Activated B cell treated with CpG ODN at 0.5 μM for 24 hours (primary cell): ENCODE measurements at regions of chr19 and their contacts with region 1.

Region 1: GRCh38 chr19:38618590-38619360 is at the start of gene EIF3K:
- DNase-seq: peak; percentile 97
- ATAC-seq: peak; percentile 28
- H3K4me3 Mint-ChIP-seq: peak within 1 kb of the TSS; percentile 100
- H3K27ac Mint-ChIP-seq: peak within 1 kb of the TSS; percentile 97
- H3K4me1 Mint-ChIP-seq: peaks cover 53% of the 10 kb centered on the region
- H3K27me3 Mint-ChIP-seq: no peaks in the 10 kb centered on the region
- CTCF ChIP-seq: no peak
- total RNA-seq, gene EIF3K: 344 and 385 TPM in 2 replicates

Region 2: DNA sequence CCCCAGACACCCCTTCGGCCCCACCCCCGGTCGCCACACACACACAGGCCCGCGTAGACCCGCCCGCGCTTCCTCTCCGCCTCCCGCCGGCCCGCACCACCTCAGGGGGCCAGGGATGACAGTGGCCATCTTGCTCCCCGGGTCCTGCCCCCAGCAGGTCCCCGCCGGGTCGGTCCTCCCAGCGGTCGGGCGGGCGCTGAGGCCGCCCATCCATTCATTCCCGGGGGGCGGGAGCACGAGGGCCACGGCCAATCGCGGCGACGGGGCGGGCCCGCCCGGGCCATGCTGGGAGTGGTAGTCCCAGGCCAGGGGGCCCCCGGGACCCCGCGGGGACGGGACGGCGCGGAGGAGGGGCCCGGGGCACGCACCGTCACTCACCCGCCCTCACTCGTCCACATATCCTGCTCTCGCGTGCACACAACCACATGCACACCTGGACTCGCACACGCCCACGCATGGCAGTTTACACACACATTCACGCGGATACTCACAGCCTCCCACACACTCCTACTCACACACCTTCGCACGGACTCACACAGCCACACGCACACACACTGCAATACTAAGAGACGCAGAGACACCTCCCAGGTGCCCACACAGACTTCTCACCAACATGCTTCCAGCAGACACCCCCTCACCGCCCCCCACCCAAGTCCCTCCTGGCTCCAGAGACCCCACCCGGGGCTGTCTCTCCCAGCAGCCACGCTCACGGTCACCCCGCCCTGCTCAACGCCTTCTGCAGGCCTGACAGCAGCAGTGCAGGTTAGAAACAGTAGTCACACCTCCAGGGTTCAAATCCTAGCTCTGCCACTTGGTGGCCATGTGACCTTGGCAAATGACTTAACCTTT is 394.5 kb before region 1 on chr19 and contains the start of gene DPF1:
- CTCF ChIA-PET with region 1: no interaction called
- POLR2A ChIA-PET with region 1: no interaction called
- intact Hi-C with region 1: loop called (anchors 10 kb)
- DNase-seq: peak; percentile 64
- ATAC-seq: peak; percentile 88
- H3K4me3 Mint-ChIP-seq: peak within 1 kb of the TSS; percentile 85
- H3K27ac Mint-ChIP-seq: peak within 1 kb of the TSS; percentile 66
- H3K4me1 Mint-ChIP-seq: peaks cover 35% of the 10 kb centered on the region
- H3K27me3 Mint-ChIP-seq: peaks cover 52% of the 10 kb centered on the region
- CTCF ChIP-seq: no peak
- total RNA-seq, gene DPF1: not detected in 2 replicates

Region 3: GRCh38 chr19:38544034-38544958 is 74.5 kb before region 1 on chr19:
- CTCF ChIA-PET with region 1: interaction called, 7 read pairs
- POLR2A ChIA-PET with region 1: interaction called, 19 read pairs
- intact Hi-C with region 1: loop called (anchors 1 kb)
- DNase-seq: no peak
- ATAC-seq: peak; percentile 65
- H3K4me3 Mint-ChIP-seq: peak overlapping the region; percentile 11
- H3K27ac Mint-ChIP-seq: peak overlapping the region; percentile 30
- H3K4me1 Mint-ChIP-seq: peaks cover 33% of the 10 kb centered on the region
- H3K27me3 Mint-ChIP-seq: no peaks in the 10 kb centered on the region
- CTCF ChIP-seq: peak; percentile 41

Region 4: DNA sequence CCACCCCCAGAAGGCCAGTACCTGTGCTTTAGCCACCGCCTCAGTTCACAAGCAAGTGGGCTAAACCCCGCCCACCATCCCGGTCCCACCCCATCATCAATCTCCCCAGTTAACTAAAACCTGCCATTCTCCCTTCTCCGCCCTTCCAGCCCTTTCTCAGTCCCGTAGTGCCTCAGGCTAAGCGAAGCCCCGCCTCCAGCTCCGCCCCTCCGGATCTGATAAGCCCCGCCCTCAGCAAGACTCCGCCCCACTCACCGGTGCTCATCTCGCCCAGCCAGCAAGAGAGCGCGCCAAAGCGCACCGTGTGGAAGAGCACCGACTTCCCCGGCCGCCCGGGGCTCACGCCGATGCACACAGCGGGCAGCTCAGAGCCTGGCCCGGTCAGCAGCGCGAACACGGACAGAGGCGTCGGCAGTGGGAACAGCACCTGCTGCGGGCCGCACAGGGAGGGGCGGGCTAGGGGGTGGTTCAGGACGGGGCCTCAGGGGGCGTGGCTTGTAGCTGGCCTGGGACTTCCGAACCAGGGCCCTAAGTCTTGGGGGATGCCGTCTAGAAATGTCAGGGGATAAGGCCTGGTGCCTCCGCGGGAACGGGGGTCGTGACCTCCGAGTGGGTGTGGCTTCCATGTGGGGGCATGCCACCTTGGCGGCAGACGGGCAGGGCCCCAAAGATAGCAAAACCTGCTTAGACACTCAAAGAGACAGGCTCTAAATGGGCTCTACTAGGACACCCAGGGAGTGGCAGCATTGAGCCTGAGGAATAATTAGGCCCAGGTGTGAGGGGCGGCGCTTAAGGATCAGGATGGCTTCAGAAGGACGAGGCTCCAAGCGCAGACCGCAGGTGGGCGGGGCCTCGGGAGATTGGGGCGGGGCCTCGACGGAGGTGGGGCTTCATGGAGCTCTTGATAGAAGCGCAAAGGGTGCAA is 22.5 kb before region 1 on chr19:
- CTCF ChIA-PET with region 1: no interaction called
- POLR2A ChIA-PET with region 1: interaction called, 12 read pairs
- intact Hi-C with region 1: no loop called
- DNase-seq: no peak
- ATAC-seq: peak; percentile 42
- H3K4me3 Mint-ChIP-seq: no peak overlapping the region
- H3K27ac Mint-ChIP-seq: no peak overlapping the region
- H3K4me1 Mint-ChIP-seq: no peaks in the 10 kb centered on the region
- H3K27me3 Mint-ChIP-seq: no peaks in the 10 kb centered on the region
- CTCF ChIP-seq: no peak

Region 5: DNA sequence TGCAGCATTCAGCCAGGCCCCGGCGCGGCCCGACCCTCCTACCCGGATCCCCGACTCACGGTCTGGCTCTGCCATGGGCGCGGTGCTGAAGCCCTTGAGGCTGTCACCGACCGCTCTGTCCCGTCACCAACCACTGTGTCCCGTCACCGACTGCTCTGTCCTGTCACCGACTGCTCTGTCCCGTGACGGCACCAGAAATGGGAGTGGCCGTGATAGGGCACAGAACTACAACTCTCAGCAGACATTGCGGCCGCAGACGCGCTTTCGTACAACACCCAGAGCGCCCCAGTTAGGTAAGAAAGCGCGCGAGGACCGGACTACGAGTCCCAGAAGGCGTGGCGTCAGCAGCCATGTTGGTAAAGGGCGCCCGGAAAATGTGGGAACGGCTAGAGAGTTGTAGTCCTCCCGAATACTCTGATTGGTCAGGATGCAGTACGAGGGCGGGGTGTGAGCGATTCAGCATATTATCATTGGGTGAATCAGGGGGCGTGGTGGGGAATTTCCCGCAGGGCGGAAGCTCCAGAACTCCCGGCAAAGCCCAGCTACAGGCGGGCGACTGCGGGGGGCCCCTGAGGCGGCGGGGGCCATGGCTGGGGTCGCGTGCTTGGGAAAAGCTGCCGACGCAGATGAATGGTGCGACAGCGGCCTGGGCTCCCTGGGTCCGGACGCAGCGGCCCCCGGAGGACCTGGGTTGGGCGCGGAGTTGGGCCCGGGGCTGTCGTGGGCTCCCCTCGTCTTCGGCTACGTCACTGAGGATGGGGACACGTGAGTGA is 280.9 kb after region 1 on chr19 and contains the starts of genes NFKBIB and SIRT2:
- CTCF ChIA-PET with region 1: no interaction called
- POLR2A ChIA-PET with region 1: interaction called, 7 read pairs
- intact Hi-C with region 1: loop called (anchors 5 kb)
- DNase-seq: peak; percentile 91
- ATAC-seq: peak; percentile 91
- H3K4me3 Mint-ChIP-seq: peak within 1 kb of the TSS; percentile 91
- H3K27ac Mint-ChIP-seq: peak within 1 kb of the TSS; percentile 87
- H3K4me1 Mint-ChIP-seq: peaks cover 41% of the 10 kb centered on the region
- H3K27me3 Mint-ChIP-seq: no peaks in the 10 kb centered on the region
- CTCF ChIP-seq: no peak
- total RNA-seq, gene NFKBIB: 45.5 and 49.5 TPM in 2 replicates
- total RNA-seq, gene SIRT2: 28.4 and 32.7 TPM in 2 replicates